Mammary epithelial cell (primary cell): ENCODE measurements at regions of chr18 and their contacts with region 1.

Region 1: GRCh38 chr18:48475635-48476549 is 62.9 kb upstream of the CTIF start:
- DNase-seq: peak; percentile 57
- H3K4me3 ChIP-seq: no peak overlapping the region
- H3K27ac ChIP-seq: no peak overlapping the region
- H3K4me1 ChIP-seq: no peaks in the 10 kb centered on the region
- H3K27me3 ChIP-seq: no peaks in the 10 kb centered on the region
- CTCF ChIP-seq: peak; percentile 87 to 89

Region 2: GRCh38 chr18:48136531-48137332 is 339.2 kb before region 1 on chr18:
- CTCF ChIA-PET with region 1: no interaction called
- dilution Hi-C with region 1: no loop called
- in situ Hi-C with region 1: no loop called
- intact Hi-C with region 1: no loop called
- DNase-seq: no peak
- H3K4me3 ChIP-seq: peak overlapping the region; percentile 50 to 53 (median 51)
- H3K27ac ChIP-seq: no peak overlapping the region
- H3K4me1 ChIP-seq: peaks cover 36% of the 10 kb centered on the region
- H3K27me3 ChIP-seq: no peaks in the 10 kb centered on the region
- CTCF ChIP-seq: no peak

Region 3: GRCh38 chr18:48538531-48539405 is 62.9 kb after region 1 on chr18 and contains the start of gene CTIF:
- CTCF ChIA-PET with region 1: no interaction called
- dilution Hi-C with region 1: no loop called
- in situ Hi-C with region 1: loop called in 1 of 2 experiments (anchors 10 kb)
- intact Hi-C with region 1: loop called (anchors 1 kb)
- DNase-seq: peak; percentile 94
- H3K4me3 ChIP-seq: peak within 1 kb of the TSS; percentile 77 to 96 (median 92)
- H3K27ac ChIP-seq: peak within 1 kb of the TSS; percentile 91
- H3K4me1 ChIP-seq: peaks cover 25% of the 10 kb centered on the region
- H3K27me3 ChIP-seq: no peaks in the 10 kb centered on the region
- CTCF ChIP-seq: no peak
- total RNA-seq, gene CTIF: 68.8 to 70.8 TPM

Region 4: DNA sequence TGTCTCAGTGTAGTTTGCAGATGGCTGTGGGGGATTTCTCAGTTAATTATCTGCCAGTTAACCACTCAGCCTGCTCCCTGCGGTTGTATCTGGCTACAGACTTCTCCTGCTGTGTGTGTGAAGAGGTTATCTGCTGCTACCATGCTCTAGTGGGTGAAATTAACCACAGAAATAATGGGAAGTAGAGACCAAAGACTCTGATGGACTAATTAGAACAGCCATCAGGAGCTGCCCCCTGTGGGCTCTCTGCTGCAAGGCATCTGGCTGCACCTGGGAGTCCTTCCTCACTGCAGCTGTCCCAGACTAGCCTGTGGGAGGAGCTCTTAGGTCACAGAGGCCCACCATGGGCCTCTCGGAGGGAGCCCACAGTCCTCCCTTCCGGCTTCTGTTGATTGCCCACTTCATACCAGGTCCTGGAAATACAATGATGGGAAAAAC is 129.5 kb after region 1 on chr18:
- CTCF ChIA-PET with region 1: no interaction called
- dilution Hi-C with region 1: no loop called
- in situ Hi-C with region 1: no loop called
- intact Hi-C with region 1: loop called (anchors 1 kb)
- DNase-seq: no peak
- H3K4me3 ChIP-seq: no peak overlapping the region
- H3K27ac ChIP-seq: no peak overlapping the region
- H3K4me1 ChIP-seq: peaks cover 16% of the 10 kb centered on the region
- H3K27me3 ChIP-seq: no peaks in the 10 kb centered on the region
- CTCF ChIP-seq: peak; percentile 19 to 21

Region 5: DNA sequence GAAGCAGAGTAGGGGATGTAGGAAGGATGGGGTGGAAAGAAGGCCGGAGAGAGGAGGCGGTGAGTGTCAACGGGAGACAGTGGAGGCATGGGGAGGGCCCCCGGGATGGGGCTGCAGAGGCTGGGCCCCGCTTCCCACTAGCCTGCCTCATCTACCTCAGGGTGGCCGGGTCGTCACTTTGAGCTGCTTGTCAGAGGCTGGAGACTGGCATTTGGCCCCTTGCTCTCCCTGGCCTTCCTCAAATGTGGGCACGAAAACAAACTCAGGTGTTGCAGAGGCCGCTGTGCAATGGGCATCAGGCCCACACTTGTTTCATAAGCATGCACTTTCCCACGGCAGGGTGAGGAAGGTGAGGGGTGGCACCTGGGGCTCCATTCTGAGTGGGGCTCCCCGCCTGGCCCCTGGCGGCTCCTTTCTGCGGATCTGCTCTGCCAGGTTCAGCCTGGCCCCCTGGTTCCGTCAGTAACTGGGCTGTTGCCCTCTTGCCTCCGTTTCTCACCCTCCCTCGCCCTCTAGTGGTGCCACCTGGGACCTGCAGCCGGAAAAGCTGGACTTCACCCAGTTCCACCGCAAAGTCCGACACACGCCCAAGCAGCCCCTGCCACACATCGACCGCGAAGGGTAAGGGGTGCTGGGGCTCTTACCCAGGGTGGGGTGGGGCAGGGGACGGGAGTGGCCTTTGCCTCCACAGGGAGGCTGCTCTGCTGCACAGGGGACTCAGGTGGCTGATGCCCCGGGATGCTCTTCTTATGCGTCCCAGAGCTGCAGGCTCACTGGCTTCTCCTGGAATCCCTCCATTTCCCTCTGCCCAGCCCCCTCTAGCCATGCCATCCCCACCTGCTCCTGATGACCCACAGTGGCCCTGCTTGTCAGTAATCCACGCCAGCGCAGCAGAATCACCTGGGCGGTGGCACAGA is 188.3 kb after region 1 on chr18:
- CTCF ChIA-PET with region 1: interaction called, 3 read pairs
- dilution Hi-C with region 1: no loop called
- in situ Hi-C with region 1: loop called (anchors 5 kb)
- intact Hi-C with region 1: loop called (anchors 1 kb)
- DNase-seq: peak; percentile 28
- H3K4me3 ChIP-seq: no peak overlapping the region
- H3K27ac ChIP-seq: no peak overlapping the region
- H3K4me1 ChIP-seq: peaks cover 12% of the 10 kb centered on the region
- H3K27me3 ChIP-seq: no peaks in the 10 kb centered on the region
- CTCF ChIP-seq: peak; percentile 91 to 96

Region 6: GRCh38 chr18:49178736-49179135 is 702.8 kb after region 1 on chr18:
- CTCF ChIA-PET with region 1: interaction called, 10 read pairs
- dilution Hi-C with region 1: no loop called
- in situ Hi-C with region 1: no loop called
- intact Hi-C with region 1: no loop called
- DNase-seq: no peak
- H3K4me3 ChIP-seq: no peak overlapping the region
- H3K27ac ChIP-seq: no peak overlapping the region
- H3K4me1 ChIP-seq: peaks cover 5% of the 10 kb centered on the region
- H3K27me3 ChIP-seq: no peaks in the 10 kb centered on the region
- CTCF ChIP-seq: peak; percentile 52 to 64

Region 7: DNA sequence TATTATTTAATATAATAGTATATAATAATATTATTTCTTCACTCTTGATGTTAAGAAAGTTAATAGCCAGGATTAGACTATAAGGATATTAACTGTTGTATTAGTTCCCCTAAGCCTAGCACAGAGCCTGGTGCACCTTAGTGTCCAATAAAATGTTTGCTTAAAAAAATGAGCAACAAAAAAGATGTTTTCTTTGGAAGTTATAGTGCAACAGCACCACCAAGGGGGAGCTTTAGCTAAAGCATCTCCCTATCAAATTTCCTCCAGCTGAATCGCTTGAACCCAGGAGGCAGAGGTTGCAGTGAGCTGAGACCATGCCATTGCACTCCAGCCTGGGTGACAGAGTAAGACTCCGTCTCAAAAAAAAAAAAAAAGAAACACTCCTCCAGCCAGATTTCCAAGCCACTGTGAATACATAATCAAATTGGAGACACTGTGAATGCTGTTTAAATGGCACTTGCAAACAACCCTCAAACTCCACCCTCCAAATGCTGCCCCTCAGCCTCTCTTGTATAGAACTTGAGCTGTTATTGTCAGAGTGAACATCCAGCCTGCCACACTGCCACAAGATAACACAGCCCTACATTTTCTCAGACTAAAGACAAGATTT is 762.6 kb after region 1 on chr18:
- CTCF ChIA-PET with region 1: no interaction called
- dilution Hi-C with region 1: no loop called
- in situ Hi-C with region 1: no loop called
- intact Hi-C with region 1: loop called (anchors 10 kb)
- DNase-seq: no peak
- H3K4me3 ChIP-seq: no peak overlapping the region
- H3K27ac ChIP-seq: no peak overlapping the region
- H3K4me1 ChIP-seq: peaks cover 2% of the 10 kb centered on the region
- H3K27me3 ChIP-seq: no peaks in the 10 kb centered on the region
- CTCF ChIP-seq: peak; percentile 44 to 53

Region 8: GRCh38 chr18:49447810-49448745 is 972.2 kb after region 1 on chr18:
- CTCF ChIA-PET with region 1: no interaction called
- dilution Hi-C with region 1: no loop called
- in situ Hi-C with region 1: no loop called
- intact Hi-C with region 1: loop called (anchors 10 kb)
- DNase-seq: peak; percentile 63
- H3K4me3 ChIP-seq: no peak overlapping the region
- H3K27ac ChIP-seq: no peak overlapping the region
- H3K4me1 ChIP-seq: no peaks in the 10 kb centered on the region
- H3K27me3 ChIP-seq: no peaks in the 10 kb centered on the region
- CTCF ChIP-seq: peak; percentile 71 to 72